ENCODE measurements at regions of chr21 and their contacts with region 1.

Region 1: DNA sequence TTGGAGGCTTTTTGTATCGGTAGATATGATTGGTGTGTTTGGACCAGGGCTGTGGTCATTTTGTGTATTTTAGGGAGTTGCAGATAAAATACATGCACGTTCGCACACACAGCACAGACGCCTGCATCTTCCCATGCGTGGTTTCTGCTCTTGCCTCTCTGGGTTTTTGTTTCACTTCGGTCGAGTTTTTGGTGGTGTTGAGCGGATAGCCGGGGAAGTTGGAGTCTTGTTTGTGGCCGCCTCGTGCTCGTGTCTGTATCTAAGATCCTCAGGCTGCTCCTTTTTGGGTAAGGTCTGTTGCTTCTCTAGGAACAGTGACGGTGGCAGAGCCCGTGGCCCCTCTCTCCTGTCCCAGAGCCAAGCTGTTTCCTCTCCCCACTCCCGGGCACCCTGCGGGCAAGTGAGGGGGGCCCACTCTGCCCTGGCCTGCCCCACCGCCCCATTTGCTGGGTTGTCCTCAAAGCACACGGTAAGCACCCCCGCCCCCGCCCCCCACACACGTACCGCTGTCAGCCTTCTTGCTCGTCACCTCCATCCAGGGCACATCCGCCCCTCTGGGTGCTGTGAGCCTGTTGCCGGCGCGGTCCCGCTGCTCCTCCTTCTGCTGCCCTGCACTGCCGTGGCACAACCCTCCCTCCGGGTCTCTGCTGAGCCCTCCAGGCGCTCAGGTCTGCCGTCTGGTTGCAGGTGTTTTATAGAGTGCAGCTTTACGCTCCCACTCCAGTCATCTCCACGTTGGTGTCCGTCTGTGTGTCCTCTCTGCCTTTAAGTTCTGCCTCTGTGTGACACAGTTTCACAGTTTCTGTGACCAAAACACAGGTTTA is 51.9 kb downstream of the AGPAT3 start:
- DNase-seq: peak; percentile 91
- H3K4me3 ChIP-seq: peak overlapping the region; percentile 12 to 68 (median 30)
- H3K27ac ChIP-seq: peak overlapping the region in 7 of 8 donors; percentile 22 to 82 (median 75)
- H3K4me1 ChIP-seq: peaks cover 8 to 91% (median 54%) of the 10 kb centered on the region in 6 donors
- H3K27me3 ChIP-seq: no peaks in the 10 kb centered on the region
- CTCF ChIP-seq: no peak
- POLR2A ChIP-seq: no peak

Region 2: GRCh38 chr21:43866260-43866629 is 50.7 kb before region 1 on chr21:
- intact Hi-C with region 1: loop called (anchors 10 kb)
- DNase-seq: peak; percentile 78
- H3K4me3 ChIP-seq: peak overlapping the region; percentile 31 to 95 (median 82)
- H3K27ac ChIP-seq: peak overlapping the region; percentile 82 to 95 (median 92)
- H3K4me1 ChIP-seq: peaks cover 17 to 72% (median 52%) of the 10 kb centered on the region in 6 donors
- H3K27me3 ChIP-seq: peaks cover 0 to 6% (median 0%) of the 10 kb centered on the region in 7 donors
- CTCF ChIP-seq: no peak
- POLR2A ChIP-seq: no peak

Measured in spleen (tissue), 13 donors.